ENCODE measurements at regions of chr1 and their contacts with region 1.

Region 1: DNA sequence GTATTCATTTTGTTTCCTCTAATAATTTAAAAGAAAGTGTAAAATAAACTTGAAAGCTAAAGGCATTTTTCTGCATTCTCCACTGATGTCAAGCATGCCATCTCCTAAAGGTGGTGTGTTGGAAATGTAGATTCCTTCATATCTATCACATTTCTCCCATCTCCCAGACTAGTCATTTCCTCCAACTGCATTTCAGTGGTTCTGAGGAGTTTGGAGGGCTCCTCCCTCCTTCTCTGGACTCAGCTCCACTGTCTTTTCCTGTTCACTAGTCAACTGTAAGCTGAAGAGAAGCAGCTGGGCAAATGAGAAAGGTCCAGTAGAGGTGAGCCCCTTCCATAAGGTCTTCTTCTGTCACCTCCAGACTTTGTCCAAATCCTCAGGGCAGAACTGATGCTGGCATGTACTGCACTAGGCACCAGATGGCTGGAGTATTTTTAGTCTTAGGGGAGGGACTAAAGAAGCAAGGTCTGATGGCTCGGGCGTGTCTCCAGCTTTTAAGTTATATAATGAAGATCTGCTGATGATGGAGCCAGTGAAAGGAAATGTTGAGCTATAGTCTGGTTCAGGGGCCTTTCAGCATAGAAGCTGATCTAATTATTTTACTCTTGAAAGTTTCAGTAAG is 186.1 kb downstream of the NTNG1 start:
- DNase-seq: no peak
- H3K4me3 ChIP-seq: no peak overlapping the region
- H3K27ac ChIP-seq: no peak overlapping the region
- H3K4me1 ChIP-seq: no peaks in the 10 kb centered on the region
- H3K27me3 ChIP-seq: no peaks in the 10 kb centered on the region
- CTCF ChIP-seq: no peak
- POLR2A ChIP-seq: no peak

Region 2: DNA sequence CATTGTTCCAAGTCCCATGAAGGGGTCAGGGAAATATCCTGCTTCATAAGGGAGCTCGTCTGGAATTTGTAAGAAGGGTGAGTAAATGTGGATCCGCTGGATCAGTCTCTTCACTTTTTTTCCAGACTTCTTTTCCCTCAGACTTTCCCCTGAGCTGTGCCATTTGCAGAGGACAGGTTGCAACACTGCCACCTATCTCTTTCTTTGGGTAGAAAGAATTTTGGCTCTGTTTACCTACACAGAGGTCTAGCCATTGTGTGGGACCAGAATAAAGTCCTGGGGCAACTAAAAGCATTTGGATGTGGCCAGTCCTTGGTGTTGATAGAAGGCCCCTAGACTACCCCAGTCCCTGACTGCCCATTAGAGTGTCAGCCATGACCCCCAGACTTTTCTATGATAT is 1417.1 kb before region 1 on chr1:
- intact Hi-C with region 1: no loop called
- DNase-seq: no peak
- H3K4me3 ChIP-seq: no peak overlapping the region
- H3K27ac ChIP-seq: no peak overlapping the region
- H3K4me1 ChIP-seq: no peaks in the 10 kb centered on the region
- H3K27me3 ChIP-seq: no peaks in the 10 kb centered on the region
- CTCF ChIP-seq: no peak
- POLR2A ChIP-seq: no peak

Region 3: DNA sequence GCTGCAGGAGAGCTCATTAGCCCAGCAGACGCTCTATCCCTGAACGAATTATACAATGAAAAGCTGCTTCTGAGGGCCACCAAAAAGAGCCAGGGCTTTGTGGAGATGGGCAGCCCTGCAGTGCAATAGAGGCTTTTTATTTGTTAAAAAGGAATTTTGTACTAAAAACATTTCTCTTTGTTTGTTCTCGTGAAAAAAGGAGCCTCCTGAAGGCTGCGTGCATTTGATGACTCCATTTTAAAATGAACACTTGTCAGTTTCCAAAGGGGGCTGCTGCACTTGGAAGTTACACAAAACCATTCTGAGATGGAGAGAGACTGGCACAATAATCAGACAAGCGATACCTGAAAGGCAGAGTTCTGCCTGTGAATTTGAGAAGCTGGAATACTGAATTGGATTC is 16.7 kb after region 1 on chr1:
- intact Hi-C with region 1: loop called (anchors 1 kb)
- DNase-seq: no peak
- H3K4me3 ChIP-seq: no peak overlapping the region
- H3K27ac ChIP-seq: no peak overlapping the region
- H3K4me1 ChIP-seq: no peaks in the 10 kb centered on the region
- H3K27me3 ChIP-seq: no peaks in the 10 kb centered on the region
- CTCF ChIP-seq: no peak
- POLR2A ChIP-seq: no peak

Region 4: GRCh38 chr1:107914134-107914765 is 587.3 kb after region 1 on chr1:
- intact Hi-C with region 1: no loop called
- DNase-seq: no peak
- H3K4me3 ChIP-seq: no peak overlapping the region
- H3K27ac ChIP-seq: no peak overlapping the region
- H3K4me1 ChIP-seq: no peaks in the 10 kb centered on the region
- H3K27me3 ChIP-seq: no peaks in the 10 kb centered on the region
- CTCF ChIP-seq: no peak
- POLR2A ChIP-seq: no peak

Measured in breast epithelium (tissue), 4 donors.